ENCODE measurements at regions of chrX and their contacts with region 1.

Region 1: DNA sequence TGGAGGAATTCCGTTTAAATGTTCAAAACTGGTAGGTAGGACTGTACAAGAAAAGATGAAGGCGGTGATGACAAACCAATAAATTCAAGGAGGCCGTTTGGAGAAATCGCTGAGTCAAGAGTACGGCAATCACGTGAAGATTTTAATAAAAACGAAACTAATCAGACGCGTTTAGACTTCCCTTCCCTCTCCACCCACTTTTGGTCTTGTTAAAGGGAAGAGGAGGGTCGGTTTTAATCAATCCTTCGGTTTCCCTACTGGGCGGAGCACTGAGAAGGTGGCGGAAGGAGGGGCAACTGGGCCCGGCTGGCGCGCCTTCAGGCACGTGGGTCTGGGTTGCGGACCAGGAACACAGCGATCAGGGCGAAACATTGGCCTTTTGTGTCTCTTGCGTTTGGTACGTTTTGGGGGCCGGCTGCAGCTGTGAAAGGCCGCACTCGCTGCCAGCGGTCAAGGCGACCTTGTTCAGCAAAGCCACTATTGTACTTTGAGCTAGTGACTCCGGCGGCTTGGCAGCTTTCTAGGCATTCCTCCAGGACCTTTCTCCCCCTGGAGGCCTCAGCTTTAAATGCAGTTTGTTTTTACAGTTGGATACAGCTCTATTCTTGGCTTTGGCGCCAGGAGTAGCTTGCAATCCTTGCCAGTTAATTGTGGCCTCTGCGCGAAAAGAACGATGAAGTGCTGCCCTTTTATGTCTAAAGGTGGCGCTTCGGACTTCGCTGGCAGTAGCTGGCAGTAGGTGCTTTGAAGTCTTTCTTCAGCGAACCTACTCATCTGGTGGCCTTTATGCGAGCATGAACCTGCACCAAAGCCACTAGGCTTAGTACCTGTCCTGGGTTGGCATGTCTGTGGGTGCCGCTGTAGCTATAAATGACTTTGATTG is 16.8 kb upstream of the LAMP2 start:
- DNase-seq: peak; percentile 94
- ATAC-seq: peak; percentile 89
- H3K4me3 ChIP-seq: peak overlapping the region in 2 of 3 experiments; percentile 38 to 55; a peak in 5 of 6 replicates
- H3K27ac ChIP-seq: peak overlapping the region; percentile 91
- H3K4me1 ChIP-seq: peaks cover 29% of the 10 kb centered on the region
- H3K27me3 ChIP-seq: no peaks in the 10 kb centered on the region
- CTCF ChIP-seq: peak; percentile 69
- EP300 ChIP-seq: peak in 1 of 2 experiments; percentile 44; a peak in 1 of 4 replicates
- POLR2A ChIP-seq: peak; percentile 35 to 43; a peak in 2 of 4 replicates
- RAD21 ChIP-seq: 0 out of 2 replicates have a peak, but pooled peaks have one; percentile 14

Region 2: DNA sequence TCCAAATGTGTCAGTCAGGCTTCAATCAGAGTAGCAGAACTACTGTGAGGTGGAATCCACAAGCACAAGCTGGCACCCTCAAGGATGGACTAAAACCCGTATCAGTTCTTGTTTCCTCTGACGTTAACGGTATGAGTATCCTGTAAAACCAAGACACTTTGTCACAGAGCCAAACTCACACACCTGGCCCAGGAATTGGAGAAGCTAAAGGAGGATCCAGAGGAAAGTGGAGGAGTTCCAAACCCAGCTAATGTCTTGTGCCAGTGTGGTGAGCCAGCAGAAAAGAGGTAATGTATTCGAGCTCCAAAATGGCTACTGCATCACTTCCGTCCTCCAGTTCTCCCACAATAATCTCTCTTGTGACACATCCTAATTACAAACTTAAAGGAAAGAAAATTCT is 79.2 kb before region 1 on chrX:
- CTCF ChIA-PET with region 1: no interaction called
- POLR2A ChIA-PET with region 1: no interaction called
- in situ Hi-C with region 1: no loop called
- intact Hi-C with region 1: no loop called
- DNase-seq: no peak
- ATAC-seq: no peak
- H3K4me3 ChIP-seq: no peak overlapping the region
- H3K27ac ChIP-seq: no peak overlapping the region
- H3K4me1 ChIP-seq: no peaks in the 10 kb centered on the region
- H3K27me3 ChIP-seq: no peaks in the 10 kb centered on the region
- CTCF ChIP-seq: no peak
- EP300 ChIP-seq: no peak
- POLR2A ChIP-seq: no peak
- RAD21 ChIP-seq: no peak

Region 3: GRCh38 chrX:120755066-120755846 is 269.4 kb after region 1 on chrX:
- CTCF ChIA-PET with region 1: no interaction called
- POLR2A ChIA-PET with region 1: interaction called, 13 read pairs
- in situ Hi-C with region 1: loop called (anchors 10 kb)
- intact Hi-C with region 1: no loop called
- DNase-seq: peak; percentile 82
- ATAC-seq: peak; percentile 78
- H3K4me3 ChIP-seq: no peak overlapping the region
- H3K27ac ChIP-seq: peak overlapping the region; percentile 84
- H3K4me1 ChIP-seq: peaks cover 59% of the 10 kb centered on the region
- H3K27me3 ChIP-seq: no peaks in the 10 kb centered on the region
- CTCF ChIP-seq: no peak
- EP300 ChIP-seq: peak in 1 of 2 experiments; percentile 82; a peak in 2 of 4 replicates
- POLR2A ChIP-seq: no peak
- RAD21 ChIP-seq: no peak